PC-9 (cell line): ENCODE measurements at regions of chr19 and their contacts with region 1.

Region 1: DNA sequence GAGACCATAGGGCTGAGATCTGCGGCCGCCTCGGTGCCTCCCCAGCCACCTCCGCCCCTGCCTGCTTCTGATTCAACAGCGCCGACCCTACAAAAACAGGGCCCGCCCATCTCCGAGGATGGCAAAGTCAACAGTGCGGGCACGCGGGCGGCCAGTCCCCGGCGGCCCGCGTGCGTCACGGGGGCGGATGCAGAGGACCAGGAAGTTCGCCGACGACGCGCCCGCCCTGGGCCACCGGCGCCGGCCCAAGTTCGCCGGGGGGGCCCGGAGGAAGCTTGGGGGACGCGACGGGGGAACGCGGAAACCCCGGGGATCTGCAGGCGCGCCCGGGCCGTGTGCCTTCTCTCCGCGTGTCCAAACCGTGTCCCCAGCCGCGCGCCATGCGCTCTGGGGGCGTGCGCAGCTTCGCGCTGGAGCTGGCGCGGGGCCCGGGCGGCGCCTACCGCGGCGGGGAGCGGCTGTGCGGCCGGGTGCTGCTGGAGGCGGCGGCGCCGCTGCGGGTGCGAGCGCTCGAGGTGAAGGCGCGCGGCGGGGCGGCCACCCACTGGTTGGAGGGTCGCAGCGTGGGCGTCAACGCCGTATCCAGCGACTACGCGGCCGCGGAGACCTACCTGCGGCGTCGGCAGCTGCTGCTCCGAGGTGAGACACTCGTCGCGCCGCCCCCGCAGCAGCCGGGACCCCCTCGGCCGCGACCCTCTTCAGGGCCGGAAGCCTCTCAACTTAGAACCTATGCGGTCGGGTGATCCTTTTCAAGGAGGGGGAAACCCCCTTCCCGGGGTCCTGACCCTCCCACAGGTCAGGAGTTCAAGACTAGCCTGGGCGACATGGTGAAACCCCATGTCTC is 6.8 kb upstream of the ARRDC2 start:
- DNase-seq: peak; percentile 85 to 88
- H3K4me3 ChIP-seq: peak overlapping the region; percentile 99
- H3K27ac ChIP-seq: peak overlapping the region; percentile 75
- H3K4me1 ChIP-seq: peaks cover 38% of the 10 kb centered on the region
- H3K27me3 ChIP-seq: no peaks in the 10 kb centered on the region
- CTCF ChIP-seq: no peak

Region 2: DNA sequence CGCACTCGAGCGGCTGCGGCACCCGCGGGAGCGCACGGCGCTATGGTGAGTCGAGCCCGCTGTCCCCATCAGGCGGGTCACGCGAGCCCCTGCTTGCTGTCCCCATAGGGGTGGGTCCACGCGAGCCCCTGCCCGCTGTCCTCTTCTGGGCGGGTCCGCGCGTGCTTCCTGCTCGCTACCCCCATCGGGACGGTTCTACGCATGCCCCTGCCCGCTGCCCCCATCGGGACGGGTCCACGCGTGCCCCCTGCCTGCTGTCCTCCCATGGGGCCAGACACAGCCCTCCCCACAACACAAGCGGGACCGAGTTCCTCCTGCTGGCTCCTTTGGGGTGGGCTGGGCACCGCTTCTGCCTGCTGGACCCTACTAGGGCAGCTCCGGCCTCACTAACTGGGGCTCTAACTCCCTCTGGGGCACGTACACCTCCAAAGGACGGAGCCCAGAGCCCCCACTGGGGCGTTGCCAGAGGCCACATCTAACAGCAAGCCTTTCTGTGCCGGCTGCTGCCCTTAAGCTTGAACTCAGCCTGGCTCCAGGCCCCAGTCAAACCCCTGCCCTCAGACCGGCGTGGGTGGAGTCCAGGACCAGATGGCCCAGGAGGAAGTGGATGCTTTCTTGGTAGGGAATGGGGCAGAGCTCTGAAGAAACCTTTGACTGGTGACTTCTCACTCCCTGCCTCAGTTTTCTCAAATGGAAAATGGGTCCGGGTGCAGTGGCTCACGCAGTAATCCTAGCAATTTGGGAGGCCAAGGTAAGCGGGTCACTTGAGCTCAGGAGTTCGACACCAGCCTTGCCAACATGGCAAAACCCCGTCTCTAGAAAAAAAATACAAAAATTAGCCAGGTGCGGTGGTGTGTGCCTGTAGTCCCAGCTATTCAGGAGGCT is 445.0 kb before region 1 on chr19:
- CTCF ChIA-PET with region 1: no interaction called
- POLR2A ChIA-PET with region 1: no interaction called
- intact Hi-C with region 1: no loop called
- DNase-seq: peak; percentile 71 to 79
- H3K4me3 ChIP-seq: peak overlapping the region; percentile 95
- H3K27ac ChIP-seq: 0 out of 2 replicates have a peak overlapping the region, but pooled peaks have one; percentile 0
- H3K4me1 ChIP-seq: peaks cover 7% of the 10 kb centered on the region
- H3K27me3 ChIP-seq: no peaks in the 10 kb centered on the region
- CTCF ChIP-seq: no peak

Region 3: GRCh38 chr19:18131841-18132596 is 130.9 kb after region 1 on chr19:
- CTCF ChIA-PET with region 1: interaction called, 13 read pairs
- POLR2A ChIA-PET with region 1: no interaction called
- intact Hi-C with region 1: no loop called
- DNase-seq: no peak
- H3K4me3 ChIP-seq: no peak overlapping the region
- H3K27ac ChIP-seq: no peak overlapping the region
- H3K4me1 ChIP-seq: no peaks in the 10 kb centered on the region
- H3K27me3 ChIP-seq: no peaks in the 10 kb centered on the region
- CTCF ChIP-seq: no peak